Activated T-helper 1 cell treated with anti-CD3 and anti-CD28 coated beads, Interleukin-12 subunit alpha, Interleukin-12 subunit beta, Interleukin-2, Interleukin-4 antibody, amounts not matched to agents 30 ng/mL and 10 ng/mL and 1 ng/mL, durations not matched to agents 14 hours and 24 hours and 36 hours (primary cell): ENCODE measurements at regions of chr11 and their contacts with region 1.

Region 1: DNA sequence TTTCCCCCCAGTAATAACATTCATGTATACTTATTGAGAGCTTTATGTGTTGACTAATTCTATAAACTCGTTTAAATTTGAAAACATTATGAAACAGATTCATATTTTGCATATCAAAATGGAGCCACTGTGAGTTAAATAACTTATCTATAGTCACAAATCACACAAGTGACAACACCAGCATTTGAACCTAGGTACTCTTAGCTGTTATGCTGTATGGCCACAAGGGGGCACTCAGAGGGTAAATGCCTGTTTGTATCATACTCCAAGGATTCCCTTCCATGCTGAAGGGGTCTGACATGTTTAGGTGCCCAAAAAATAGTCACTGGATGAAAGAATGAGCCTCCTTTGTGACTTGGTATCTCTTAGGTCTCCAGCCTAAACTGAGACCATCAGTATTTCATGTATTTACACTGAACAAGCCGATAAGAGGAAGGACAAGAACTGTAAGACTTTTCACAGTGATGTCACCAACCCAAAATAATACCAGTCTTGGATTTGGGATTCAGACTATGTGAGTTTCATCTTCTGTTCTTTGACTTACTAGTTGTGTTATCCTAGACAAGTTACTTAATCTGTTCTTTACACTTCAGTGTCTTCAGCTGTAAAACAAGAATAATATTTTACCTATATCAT is 12.2 kb upstream of the OR52D1 start:
- DNase-seq: peak; percentile 4
- H3K4me3 Mint-ChIP-seq: no peak overlapping the region
- H3K27ac Mint-ChIP-seq: no peak overlapping the region
- H3K4me1 Mint-ChIP-seq: no peaks in the 10 kb centered on the region
- H3K27me3 Mint-ChIP-seq: peaks cover 6% of the 10 kb centered on the region

Region 2: DNA sequence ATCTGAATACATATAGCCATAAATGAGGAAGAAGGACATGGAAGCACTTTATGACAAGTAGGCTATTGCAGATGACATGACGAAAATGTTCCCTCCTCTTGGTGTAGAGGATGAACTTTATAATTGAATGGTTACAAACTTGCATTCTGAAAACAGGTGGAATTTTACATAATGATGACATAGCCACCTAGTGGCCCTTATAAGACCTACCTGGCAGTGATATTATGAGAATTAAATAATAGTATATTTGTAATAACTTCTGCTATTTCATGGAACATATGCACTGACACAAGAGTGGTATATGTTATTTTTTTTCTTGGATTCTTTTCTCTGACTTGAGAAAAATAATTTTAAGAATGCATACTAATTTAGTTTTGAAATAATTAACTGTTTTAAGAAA is 236.2 kb after region 1 on chr11:
- intact Hi-C with region 1: loop called (anchors 5 kb)
- DNase-seq: no peak
- H3K4me3 Mint-ChIP-seq: no peak overlapping the region
- H3K27ac Mint-ChIP-seq: no peak overlapping the region
- H3K4me1 Mint-ChIP-seq: no peaks in the 10 kb centered on the region
- H3K27me3 Mint-ChIP-seq: no peaks in the 10 kb centered on the region

Region 3: GRCh38 chr11:5831196-5831829 is 355.0 kb after region 1 on chr11:
- intact Hi-C with region 1: no loop called
- DNase-seq: no peak
- H3K4me3 Mint-ChIP-seq: no peak overlapping the region
- H3K27ac Mint-ChIP-seq: no peak overlapping the region
- H3K4me1 Mint-ChIP-seq: no peaks in the 10 kb centered on the region
- H3K27me3 Mint-ChIP-seq: peaks cover 3% of the 10 kb centered on the region

Region 4: DNA sequence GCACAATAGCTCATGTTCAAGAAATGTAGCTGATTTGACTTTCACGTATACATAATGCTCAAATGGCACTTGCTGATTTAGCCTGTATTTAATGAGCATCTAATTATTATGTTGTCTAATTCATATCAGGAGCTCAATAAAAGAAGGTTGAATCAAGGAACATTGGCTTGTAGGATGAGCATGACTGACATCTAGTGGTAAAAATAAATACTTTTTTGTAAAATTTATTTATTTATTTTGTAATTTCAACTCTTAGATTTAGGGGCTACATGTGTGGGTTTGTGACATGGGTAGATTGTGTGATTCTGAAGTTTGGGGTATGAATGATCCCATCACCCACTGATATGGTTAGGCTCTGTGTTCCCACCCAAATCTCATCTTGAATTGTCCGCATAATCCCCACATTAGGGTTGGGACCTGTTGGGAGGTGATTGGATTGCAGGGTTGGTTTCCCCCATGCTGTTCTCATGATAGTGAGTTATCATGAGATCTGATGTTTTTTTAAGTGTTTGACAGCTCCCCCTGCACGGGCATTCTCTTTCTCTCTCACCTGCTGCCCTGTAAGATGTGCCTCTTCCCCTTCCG is 415.0 kb after region 1 on chr11:
- intact Hi-C with region 1: loop called (anchors 1 kb)
- DNase-seq: no peak
- H3K4me3 Mint-ChIP-seq: no peak overlapping the region
- H3K27ac Mint-ChIP-seq: no peak overlapping the region
- H3K4me1 Mint-ChIP-seq: no peaks in the 10 kb centered on the region
- H3K27me3 Mint-ChIP-seq: no peaks in the 10 kb centered on the region